H1 (cell line): ENCODE measurements at regions of chr1 and their contacts with region 1.

Region 1: GRCh38 chr1:47179017-47179987 is 10.5 kb downstream of the PDZK1IP1 start:
- DNase-seq: peak; percentile 87 to 93
- H3K4me3 ChIP-seq: peak overlapping the region; percentile 26 to 58 (median 48); a peak in 7 of 8 replicates
- H3K27ac ChIP-seq: 0 out of 2 replicates have a peak overlapping the region, but pooled peaks have one; percentile 41
- H3K4me1 ChIP-seq: peaks cover 0 to 10% (median 2%) of the 10 kb centered on the region in 4 experiments; a peak in 4 of 7 replicates
- H3K27me3 ChIP-seq: peaks cover 0 to 13% (median 12%) of the 10 kb centered on the region in 4 experiments; a peak in 5 of 7 replicates
- CTCF ChIP-seq: peak; percentile 84 to 97 (median 93)
- EP300 ChIP-seq: peak in 1 of 2 experiments; percentile 55; a peak in 1 of 3 replicates
- POLR2A ChIP-seq: peak in 1 of 2 experiments; percentile 32; a peak in 1 of 3 replicates
- RAD21 ChIP-seq: peak; percentile 96

Region 2: DNA sequence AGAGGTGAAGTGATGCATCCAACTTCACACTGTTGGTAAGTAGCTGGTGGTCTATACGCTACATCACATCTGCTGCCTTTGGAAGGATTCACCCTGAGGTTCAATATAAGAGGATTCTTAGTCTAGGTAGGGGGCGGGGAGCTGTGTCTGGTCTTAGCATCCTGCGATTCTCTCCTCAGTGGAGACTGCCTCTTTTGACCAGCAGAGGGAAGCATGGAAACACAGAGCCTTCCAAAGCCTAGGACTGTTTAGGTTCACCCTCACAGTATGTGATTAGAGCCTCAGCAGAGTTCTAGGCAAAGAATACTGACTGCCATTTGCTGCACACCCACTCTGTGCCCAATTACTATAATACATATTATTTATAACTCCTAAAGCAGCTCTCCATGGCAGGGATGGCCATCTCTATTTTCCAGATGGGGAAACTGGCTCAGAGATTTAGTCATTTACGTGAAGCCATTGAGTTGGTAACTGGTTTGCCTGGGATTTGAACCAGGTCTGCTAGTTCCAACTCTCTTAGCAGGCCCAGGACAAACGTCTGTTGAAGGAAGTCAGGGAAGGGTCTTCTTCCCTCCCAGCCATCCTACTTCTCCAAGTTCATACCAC is 431.5 kb before region 1 on chr1:
- CTCF ChIA-PET with region 1: interaction called, 17 read pairs
- POLR2A ChIA-PET with region 1: no interaction called
- DNase-seq: peak in 1 of 2 experiments; percentile 65
- H3K4me3 ChIP-seq: no peak overlapping the region
- H3K27ac ChIP-seq: no peak overlapping the region
- H3K4me1 ChIP-seq: no peaks in the 10 kb centered on the region
- H3K27me3 ChIP-seq: no peaks in the 10 kb centered on the region
- CTCF ChIP-seq: peak; percentile 62 to 87 (median 87)
- EP300 ChIP-seq: no peak
- POLR2A ChIP-seq: no peak
- RAD21 ChIP-seq: peak; percentile 88 to 92

Region 3: DNA sequence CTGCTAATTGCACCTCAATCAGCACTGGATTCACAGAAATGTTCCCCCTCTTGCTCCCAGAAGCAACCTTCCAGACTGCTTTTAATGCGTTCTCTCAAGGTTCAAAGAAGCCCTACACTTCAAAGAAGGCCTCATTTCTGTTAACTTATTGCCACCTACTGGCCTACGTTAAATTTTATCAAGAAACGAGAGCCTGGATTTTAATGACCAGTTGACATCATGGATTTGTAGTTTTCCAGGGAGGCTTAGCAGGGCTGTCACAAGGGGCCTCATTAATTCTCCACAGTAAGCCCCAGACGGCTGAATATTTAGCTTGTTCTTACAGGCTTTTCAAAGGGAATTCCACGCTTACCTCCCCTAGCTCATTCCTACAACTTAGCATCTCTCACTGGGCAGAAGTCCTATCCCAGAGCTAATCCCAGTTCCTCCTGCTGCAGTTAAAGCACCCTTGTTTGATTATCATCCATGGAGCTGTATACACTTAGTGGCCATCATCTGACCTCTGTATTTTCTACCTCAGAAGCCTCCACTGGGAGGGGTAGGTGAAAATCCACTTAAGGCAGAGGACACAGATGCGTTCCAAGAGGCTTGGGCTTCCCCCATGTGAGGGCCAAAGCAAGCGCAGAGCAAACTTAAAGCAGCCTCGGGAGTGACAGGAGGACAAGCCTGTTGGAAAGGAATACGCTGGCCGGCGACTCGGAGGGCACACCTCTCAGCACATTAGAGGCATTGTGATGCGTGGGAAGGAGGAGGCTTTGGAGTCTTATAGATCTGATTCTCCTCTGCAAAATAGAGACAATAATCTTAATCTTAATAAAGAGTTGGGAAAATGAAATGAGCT is 188.0 kb before region 1 on chr1:
- CTCF ChIA-PET with region 1: no interaction called
- POLR2A ChIA-PET with region 1: no interaction called
- DNase-seq: no peak
- H3K4me3 ChIP-seq: no peak overlapping the region
- H3K27ac ChIP-seq: no peak overlapping the region
- H3K4me1 ChIP-seq: peaks cover 0 to 5% (median 3%) of the 10 kb centered on the region in 4 experiments; a peak in 4 of 7 replicates
- H3K27me3 ChIP-seq: no peaks in the 10 kb centered on the region
- CTCF ChIP-seq: peak in 2 of 3 experiments; percentile 45 to 56; a peak in 3 of 4 replicates
- EP300 ChIP-seq: no peak
- POLR2A ChIP-seq: no peak
- RAD21 ChIP-seq: peak; percentile 72 to 77

Region 4: DNA sequence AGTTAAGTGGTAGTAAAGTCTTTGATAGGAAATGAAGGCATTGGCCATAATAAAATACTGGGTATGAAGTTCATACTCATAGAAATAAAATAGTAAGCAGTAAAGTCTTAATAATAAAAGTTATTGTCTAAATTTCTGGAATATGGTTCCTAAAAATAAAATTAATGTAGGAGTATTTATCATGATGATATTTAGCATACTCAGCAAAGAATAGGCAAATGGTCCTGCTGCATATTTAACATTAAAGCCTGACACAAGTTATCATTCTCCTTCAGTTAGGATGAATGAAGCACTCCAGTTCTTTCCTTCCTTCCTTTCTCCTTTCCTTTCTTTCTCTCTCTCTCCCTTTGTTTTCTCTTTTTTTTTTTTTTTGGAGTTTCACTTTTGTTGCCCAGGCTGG is 14.8 kb before region 1 on chr1:
- CTCF ChIA-PET with region 1: interaction called, 19 read pairs
- POLR2A ChIA-PET with region 1: no interaction called
- DNase-seq: no peak
- H3K4me3 ChIP-seq: no peak overlapping the region
- H3K27ac ChIP-seq: no peak overlapping the region
- H3K4me1 ChIP-seq: no peaks in the 10 kb centered on the region
- H3K27me3 ChIP-seq: no peaks in the 10 kb centered on the region
- CTCF ChIP-seq: no peak
- EP300 ChIP-seq: no peak
- POLR2A ChIP-seq: no peak
- RAD21 ChIP-seq: no peak

Region 5: GRCh38 chr1:47201179-47201578 is 21.9 kb after region 1 on chr1:
- CTCF ChIA-PET with region 1: interaction called, 207 read pairs
- POLR2A ChIA-PET with region 1: no interaction called
- DNase-seq: no peak
- H3K4me3 ChIP-seq: no peak overlapping the region
- H3K27ac ChIP-seq: no peak overlapping the region
- H3K4me1 ChIP-seq: no peaks in the 10 kb centered on the region
- H3K27me3 ChIP-seq: peaks cover 0 to 7% (median 4%) of the 10 kb centered on the region in 4 experiments; a peak in 2 of 7 replicates
- CTCF ChIP-seq: no peak
- EP300 ChIP-seq: no peak
- POLR2A ChIP-seq: no peak
- RAD21 ChIP-seq: no peak

Region 6: GRCh38 chr1:47241114-47242113 is 62.1 kb after region 1 on chr1:
- CTCF ChIA-PET with region 1: interaction called, 12 read pairs
- POLR2A ChIA-PET with region 1: no interaction called
- DNase-seq: no peak
- H3K4me3 ChIP-seq: no peak overlapping the region
- H3K27ac ChIP-seq: no peak overlapping the region
- H3K4me1 ChIP-seq: peaks cover 0 to 5% (median 0%) of the 10 kb centered on the region in 4 experiments; a peak in 2 of 7 replicates
- H3K27me3 ChIP-seq: peaks cover under 1 to 6% (median 5%) of the 10 kb centered on the region in 4 experiments; a peak in 5 of 7 replicates
- CTCF ChIP-seq: no peak
- EP300 ChIP-seq: no peak
- POLR2A ChIP-seq: no peak
- RAD21 ChIP-seq: no peak

Region 7: DNA sequence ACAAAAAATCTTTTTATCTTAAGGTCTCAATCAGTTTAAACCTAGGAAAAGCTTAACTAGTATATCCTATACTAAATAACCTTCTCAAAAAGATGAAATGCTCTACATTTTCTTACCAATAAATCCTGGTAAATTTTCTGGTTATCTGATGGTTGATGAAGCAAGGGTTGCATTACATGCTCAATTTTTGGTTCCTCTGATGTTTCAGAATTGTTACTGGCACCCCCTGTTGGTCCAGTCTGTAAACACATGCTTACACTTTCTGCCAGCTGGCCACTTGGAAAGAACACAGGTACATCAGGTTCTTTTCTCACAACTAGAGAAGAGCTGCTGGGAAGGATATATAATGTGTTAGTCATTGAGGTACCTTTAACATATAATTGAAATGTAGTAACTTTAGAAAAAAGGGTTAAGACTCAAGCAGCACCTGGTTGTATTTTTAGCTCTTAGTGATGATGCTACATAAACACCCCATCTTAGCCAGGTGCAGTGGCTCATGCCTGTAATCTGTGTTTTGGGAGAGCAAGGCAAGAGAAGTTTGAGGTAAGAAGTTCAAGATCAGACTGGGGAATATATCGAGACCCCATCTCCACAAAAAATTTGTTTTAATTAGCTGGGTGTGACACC is 83.6 kb after region 1 on chr1:
- CTCF ChIA-PET with region 1: interaction called, 153 read pairs
- POLR2A ChIA-PET with region 1: interaction called, 4 read pairs
- DNase-seq: peak in 1 of 2 experiments; percentile 73
- H3K4me3 ChIP-seq: no peak overlapping the region
- H3K27ac ChIP-seq: no peak overlapping the region
- H3K4me1 ChIP-seq: no peaks in the 10 kb centered on the region
- H3K27me3 ChIP-seq: no peaks in the 10 kb centered on the region
- CTCF ChIP-seq: peak in 2 of 3 experiments; percentile 80 to 82; a peak in 3 of 4 replicates
- EP300 ChIP-seq: no peak
- POLR2A ChIP-seq: no peak
- RAD21 ChIP-seq: peak; percentile 70 to 76

Region 8: GRCh38 chr1:47332779-47333577 is 153.7 kb after region 1 on chr1:
- CTCF ChIA-PET with region 1: no interaction called
- POLR2A ChIA-PET with region 1: no interaction called
- DNase-seq: no peak
- H3K4me3 ChIP-seq: peak overlapping the region; percentile 79 to 94 (median 86)
- H3K27ac ChIP-seq: peak overlapping the region; percentile 37
- H3K4me1 ChIP-seq: peaks cover 0 to 5% (median 3%) of the 10 kb centered on the region in 4 experiments; a peak in 5 of 7 replicates
- H3K27me3 ChIP-seq: no peaks in the 10 kb centered on the region
- CTCF ChIP-seq: no peak
- EP300 ChIP-seq: no peak
- POLR2A ChIP-seq: peak in 1 of 2 experiments; percentile 45; a peak in 1 of 3 replicates
- RAD21 ChIP-seq: no peak

Region 9: DNA sequence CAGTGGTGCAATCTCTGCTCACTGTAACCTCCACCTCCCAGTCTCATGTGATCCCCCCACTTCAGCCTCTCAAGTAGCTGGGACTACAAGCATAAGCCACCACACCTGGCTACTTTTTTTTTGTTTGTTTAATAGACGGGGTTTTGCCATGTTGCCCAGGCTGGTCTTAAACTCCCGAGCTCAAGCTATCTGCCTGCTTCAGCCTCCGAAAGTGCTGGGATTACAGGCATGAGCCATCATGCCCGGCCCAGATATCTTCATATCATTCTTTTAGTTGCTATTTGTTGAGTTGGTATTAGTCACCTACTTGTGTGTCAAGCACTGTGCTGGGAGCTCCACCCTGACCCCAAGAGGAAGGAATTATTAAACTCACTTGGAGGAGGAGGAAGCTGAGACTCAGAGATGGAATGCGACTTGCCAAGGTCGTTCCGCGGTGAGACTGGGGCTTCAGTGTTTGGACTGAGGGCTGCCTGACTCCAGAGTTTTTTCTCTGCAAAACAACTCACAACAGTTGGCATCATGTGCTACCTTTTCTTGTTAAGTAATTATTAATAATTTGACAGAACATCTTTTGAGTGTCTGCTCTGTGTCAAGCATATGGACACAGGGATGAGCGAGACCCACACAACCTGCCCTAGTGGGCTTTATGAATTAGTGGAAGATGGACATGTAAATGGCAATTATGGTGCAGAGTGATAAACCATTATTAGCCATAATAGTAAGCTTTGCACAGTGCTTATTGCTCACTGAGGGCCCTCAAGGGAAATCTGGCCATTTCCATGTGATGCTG is 390.6 kb after region 1 on chr1:
- CTCF ChIA-PET with region 1: no interaction called
- POLR2A ChIA-PET with region 1: no interaction called
- DNase-seq: no peak
- H3K4me3 ChIP-seq: no peak overlapping the region
- H3K27ac ChIP-seq: no peak overlapping the region
- H3K4me1 ChIP-seq: peaks cover 6 to 21% (median 16%) of the 10 kb centered on the region in 4 experiments
- H3K27me3 ChIP-seq: peaks cover 0 to 3% (median 2%) of the 10 kb centered on the region in 4 experiments; a peak in 2 of 7 replicates
- CTCF ChIP-seq: peak in 2 of 3 experiments; percentile 38 to 54; a peak in 3 of 4 replicates
- EP300 ChIP-seq: no peak
- POLR2A ChIP-seq: no peak
- RAD21 ChIP-seq: peak in 1 of 2 experiments; percentile 46; a peak in 3 of 4 replicates